Activated CD8-positive, alpha-beta memory T cell treated with anti-CD3 and anti-CD28 coated beads, Interleukin-2, amount 10 ng/mL, durations not matched to agents 7 days and 5 days (primary cell): ENCODE measurements at regions of chr1 and their contacts with region 1.

Region 1: GRCh38 chr1:1615256-1616044 is at the start of gene MIB2:
- DNase-seq: peak; percentile 98
- ATAC-seq: peak; percentile 87
- H3K4me3 Mint-ChIP-seq: peak within 1 kb of the TSS; percentile 90
- H3K27ac Mint-ChIP-seq: peak within 1 kb of the TSS; percentile 88
- H3K4me1 Mint-ChIP-seq: peaks cover 32% of the 10 kb centered on the region
- H3K27me3 Mint-ChIP-seq: no peaks in the 10 kb centered on the region
- total RNA-seq, gene MIB2: 40.0 to 48.3 TPM

Region 2: DNA sequence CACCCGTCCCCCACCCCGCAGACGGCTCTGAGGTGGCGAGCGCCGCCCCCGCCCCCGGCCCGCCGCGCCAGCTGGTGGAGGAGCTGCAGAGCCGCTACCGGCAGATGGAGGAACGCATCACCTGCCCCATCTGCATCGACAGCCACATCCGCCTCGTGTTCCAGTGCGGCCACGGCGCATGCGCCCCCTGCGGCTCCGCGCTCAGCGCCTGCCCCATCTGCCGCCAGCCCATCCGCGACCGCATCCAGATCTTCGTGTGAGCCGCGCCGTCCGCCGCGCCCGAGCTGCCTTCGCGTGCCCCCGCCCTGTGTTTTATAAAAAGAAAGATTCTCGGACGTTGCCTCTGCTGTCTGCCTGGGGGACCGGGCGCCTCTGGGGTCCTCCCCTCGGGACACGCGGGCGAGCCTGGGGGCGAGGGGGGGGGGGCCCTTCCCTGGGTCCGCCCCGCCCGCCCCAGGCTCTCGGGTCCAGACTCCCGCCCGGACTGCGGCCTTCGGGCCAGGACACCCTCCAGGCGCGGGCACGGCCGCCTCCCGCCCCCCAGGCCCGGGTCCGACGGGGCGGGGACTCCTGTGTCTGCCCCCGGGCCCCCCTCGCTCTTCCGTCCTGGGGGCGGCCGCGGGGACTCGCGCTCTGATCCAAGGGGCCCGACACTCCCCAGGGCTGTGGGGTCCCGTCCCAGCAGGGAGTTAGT is 15.0 kb after region 1 on chr1:
- CTCF ChIA-PET with region 1: interaction called, 30 read pairs
- DNase-seq: peak; percentile 96
- ATAC-seq: peak; percentile 82
- H3K4me3 Mint-ChIP-seq: peak overlapping the region; percentile 58
- H3K27ac Mint-ChIP-seq: peak overlapping the region; percentile 90
- H3K4me1 Mint-ChIP-seq: peaks cover 4% of the 10 kb centered on the region
- H3K27me3 Mint-ChIP-seq: peaks cover 5% of the 10 kb centered on the region